Gastrocnemius medialis (tissue), 4 donors: ENCODE measurements at regions of chr19 and their contacts with region 1.

Region 1: GRCh38 chr19:3163230-3163886 is 15.2 kb upstream of the S1PR4 start:
- DNase-seq: no peak
- ATAC-seq: peak; percentile 63 to 74
- H3K4me3 ChIP-seq: no peak overlapping the region
- H3K27ac ChIP-seq: no peak overlapping the region
- H3K4me1 ChIP-seq: no peaks in the 10 kb centered on the region
- H3K27me3 ChIP-seq: no peaks in the 10 kb centered on the region
- CTCF ChIP-seq: peak; percentile 64 to 94 (median 88)
- POLR2A ChIP-seq: no peak

Region 2: GRCh38 chr19:2887391-2887914 is 275.9 kb before region 1 on chr19:
- in situ Hi-C with region 1: loop called in 1 of 4 experiments (anchors 10 kb)
- intact Hi-C with region 1: loop called (anchors 2 kb)
- DNase-seq: no peak
- ATAC-seq: peak; percentile 65 to 74
- H3K4me3 ChIP-seq: no peak overlapping the region
- H3K27ac ChIP-seq: no peak overlapping the region
- H3K4me1 ChIP-seq: peaks cover 5 to 7% of the 10 kb centered on the region in 2 donors
- H3K27me3 ChIP-seq: peaks cover 0 to 6% (median 0%) of the 10 kb centered on the region in 3 donors
- CTCF ChIP-seq: peak; percentile 19 to 62 (median 48)
- POLR2A ChIP-seq: no peak

Region 3: GRCh38 chr19:2962045-2962561 is 201.3 kb before region 1 on chr19:
- in situ Hi-C with region 1: loop called in 3 of 4 experiments (anchors 5 to 25 kb)
- intact Hi-C with region 1: loop called (anchors 2 kb)
- DNase-seq: peak in 1 of 2 donors; percentile 27
- ATAC-seq: peak; percentile 81 to 91
- H3K4me3 ChIP-seq: peak overlapping the region in 1 of 4 donors; percentile 31
- H3K27ac ChIP-seq: no peak overlapping the region
- H3K4me1 ChIP-seq: no peaks in the 10 kb centered on the region
- H3K27me3 ChIP-seq: no peaks in the 10 kb centered on the region
- CTCF ChIP-seq: peak; percentile 55 to 88 (median 75)
- POLR2A ChIP-seq: no peak

Region 4: DNA sequence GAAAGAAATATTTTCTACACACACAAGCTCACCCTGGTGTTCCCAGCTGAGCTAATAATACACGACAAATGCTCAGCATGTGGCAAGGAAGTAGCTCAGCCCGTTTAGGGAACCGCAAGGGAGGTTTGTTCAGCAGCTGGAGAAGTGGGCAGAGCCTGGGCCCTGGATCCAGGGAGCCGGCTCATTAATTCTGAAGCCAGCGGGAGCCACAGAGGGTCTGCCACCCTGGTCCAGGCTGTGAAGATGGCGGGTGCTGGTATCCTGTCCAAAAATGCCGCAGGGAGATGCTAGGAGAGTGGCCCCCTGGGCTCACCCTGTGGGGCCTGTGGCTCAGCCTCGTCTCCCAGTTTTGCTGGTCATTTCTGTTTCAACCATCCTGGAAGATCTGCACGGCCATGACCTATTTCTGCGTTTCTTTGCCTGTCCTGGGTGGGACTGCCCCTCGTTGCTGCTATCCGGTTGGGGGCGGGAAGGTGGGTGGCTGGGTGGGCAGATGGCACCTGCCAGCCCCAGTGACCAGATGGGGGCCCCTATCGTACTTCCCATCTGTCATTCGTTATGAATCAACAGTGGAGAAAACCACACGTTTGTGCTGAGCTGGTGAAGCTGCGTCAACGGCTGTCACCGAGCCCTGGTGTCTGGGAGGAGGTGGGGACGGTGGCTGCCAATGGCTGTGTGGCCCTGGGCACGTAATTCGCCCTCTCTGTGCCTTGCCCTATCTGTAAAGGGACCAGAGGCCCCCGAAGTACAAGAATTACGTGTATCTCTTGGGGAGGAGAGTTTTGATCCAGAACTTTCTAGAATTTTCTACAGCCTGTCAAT is 30.2 kb before region 1 on chr19:
- in situ Hi-C with region 1: no loop called
- intact Hi-C with region 1: no loop called
- DNase-seq: no peak
- ATAC-seq: no peak
- H3K4me3 ChIP-seq: no peak overlapping the region
- H3K27ac ChIP-seq: peak overlapping the region in 1 of 4 donors; percentile 12
- H3K4me1 ChIP-seq: no peaks in the 10 kb centered on the region
- H3K27me3 ChIP-seq: no peaks in the 10 kb centered on the region
- CTCF ChIP-seq: no peak
- POLR2A ChIP-seq: no peak

Region 5: DNA sequence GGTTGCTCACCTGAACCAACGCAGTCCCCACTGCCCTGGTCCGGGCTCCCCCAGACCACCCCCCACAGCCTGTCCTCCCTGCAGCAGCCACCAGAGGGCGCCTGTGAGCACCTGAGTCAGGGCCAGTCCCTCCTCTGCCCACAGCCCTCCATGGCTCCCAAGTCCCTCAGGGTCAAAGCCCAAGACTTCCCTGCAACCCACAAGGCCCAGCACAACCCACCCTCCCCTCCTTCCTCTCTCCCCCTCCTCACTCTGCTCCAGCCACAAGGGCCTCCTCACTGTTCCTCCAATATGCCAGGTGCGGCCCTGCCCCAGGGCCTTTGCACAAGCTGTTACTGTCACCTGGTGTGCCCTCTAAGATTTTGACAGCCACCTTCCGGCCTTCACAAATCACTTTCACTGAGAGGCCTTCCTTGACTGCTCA is 16.7 kb before region 1 on chr19:
- in situ Hi-C with region 1: no loop called
- intact Hi-C with region 1: loop called (anchors 2 kb)
- DNase-seq: no peak
- ATAC-seq: no peak
- H3K4me3 ChIP-seq: no peak overlapping the region
- H3K27ac ChIP-seq: no peak overlapping the region
- H3K4me1 ChIP-seq: no peaks in the 10 kb centered on the region
- H3K27me3 ChIP-seq: peaks cover 4 to 13% (median 6%) of the 10 kb centered on the region in 3 donors
- CTCF ChIP-seq: peak; percentile 24 to 62 (median 60)
- POLR2A ChIP-seq: no peak